Mammary epithelial cell (primary cell): ENCODE measurements at regions of chr6 and their contacts with region 1.

Region 1: GRCh38 chr6:27237089-27237803 is 10.3 kb upstream of the PRSS16 start:
- DNase-seq: peak; percentile 71
- H3K4me3 ChIP-seq: peak overlapping the region in 2 of 3 experiments; percentile 28 to 29
- H3K27ac ChIP-seq: no peak overlapping the region
- H3K4me1 ChIP-seq: peaks cover 18% of the 10 kb centered on the region
- H3K27me3 ChIP-seq: no peaks in the 10 kb centered on the region
- CTCF ChIP-seq: no peak

Region 2: GRCh38 chr6:27213544-27214125 is 23.6 kb before region 1 on chr6:
- CTCF ChIA-PET with region 1: no interaction called
- dilution Hi-C with region 1: no loop called
- in situ Hi-C with region 1: no loop called
- intact Hi-C with region 1: loop called (anchors 2 kb)
- DNase-seq: peak; percentile 40
- H3K4me3 ChIP-seq: peak overlapping the region in 1 of 3 experiments; percentile 58
- H3K27ac ChIP-seq: no peak overlapping the region
- H3K4me1 ChIP-seq: no peaks in the 10 kb centered on the region
- H3K27me3 ChIP-seq: no peaks in the 10 kb centered on the region
- CTCF ChIP-seq: no peak

Region 3: DNA sequence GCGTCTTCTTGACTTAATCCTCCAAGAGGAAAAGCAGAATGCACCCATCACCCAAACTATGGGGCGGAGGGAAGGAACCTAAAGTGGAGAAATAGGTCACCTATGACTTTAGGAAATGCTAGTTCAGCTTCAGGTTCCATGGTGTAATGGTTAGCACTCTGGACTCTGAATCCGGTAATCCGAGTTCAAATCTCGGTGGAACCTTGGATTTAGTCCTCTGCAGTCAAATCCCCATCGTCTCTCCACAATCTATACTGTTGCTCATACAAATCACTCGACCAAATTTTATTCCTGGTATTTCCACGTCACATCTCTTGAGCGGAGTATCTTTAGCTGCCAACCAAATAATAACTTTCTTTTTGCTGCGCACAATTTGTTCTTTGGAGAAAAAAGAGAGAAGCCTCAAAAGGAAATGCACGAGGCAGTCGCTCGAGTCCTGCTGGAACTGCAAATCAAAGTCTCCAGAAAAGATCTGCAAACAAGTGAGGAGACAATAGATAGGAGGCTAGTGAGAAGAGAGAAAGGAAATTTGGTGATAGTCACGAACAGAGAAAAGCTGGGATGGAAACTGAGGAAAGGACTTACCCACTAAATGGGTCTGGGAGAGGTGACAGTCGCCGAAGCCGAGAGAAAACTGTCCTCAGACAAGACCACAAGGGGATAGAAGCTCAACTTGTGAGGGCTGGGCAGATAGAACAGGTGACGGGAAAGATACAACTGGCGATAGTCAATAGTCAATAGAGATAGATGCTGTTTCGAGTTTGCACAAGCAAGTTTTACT is 58.2 kb after region 1 on chr6:
- CTCF ChIA-PET with region 1: no interaction called
- dilution Hi-C with region 1: no loop called
- in situ Hi-C with region 1: no loop called
- intact Hi-C with region 1: loop called (anchors 2 kb)
- DNase-seq: peak; percentile 82
- H3K4me3 ChIP-seq: peak overlapping the region; percentile 54 to 77 (median 63)
- H3K27ac ChIP-seq: no peak overlapping the region
- H3K4me1 ChIP-seq: peaks cover 4% of the 10 kb centered on the region
- H3K27me3 ChIP-seq: no peaks in the 10 kb centered on the region
- CTCF ChIP-seq: no peak

Region 4: DNA sequence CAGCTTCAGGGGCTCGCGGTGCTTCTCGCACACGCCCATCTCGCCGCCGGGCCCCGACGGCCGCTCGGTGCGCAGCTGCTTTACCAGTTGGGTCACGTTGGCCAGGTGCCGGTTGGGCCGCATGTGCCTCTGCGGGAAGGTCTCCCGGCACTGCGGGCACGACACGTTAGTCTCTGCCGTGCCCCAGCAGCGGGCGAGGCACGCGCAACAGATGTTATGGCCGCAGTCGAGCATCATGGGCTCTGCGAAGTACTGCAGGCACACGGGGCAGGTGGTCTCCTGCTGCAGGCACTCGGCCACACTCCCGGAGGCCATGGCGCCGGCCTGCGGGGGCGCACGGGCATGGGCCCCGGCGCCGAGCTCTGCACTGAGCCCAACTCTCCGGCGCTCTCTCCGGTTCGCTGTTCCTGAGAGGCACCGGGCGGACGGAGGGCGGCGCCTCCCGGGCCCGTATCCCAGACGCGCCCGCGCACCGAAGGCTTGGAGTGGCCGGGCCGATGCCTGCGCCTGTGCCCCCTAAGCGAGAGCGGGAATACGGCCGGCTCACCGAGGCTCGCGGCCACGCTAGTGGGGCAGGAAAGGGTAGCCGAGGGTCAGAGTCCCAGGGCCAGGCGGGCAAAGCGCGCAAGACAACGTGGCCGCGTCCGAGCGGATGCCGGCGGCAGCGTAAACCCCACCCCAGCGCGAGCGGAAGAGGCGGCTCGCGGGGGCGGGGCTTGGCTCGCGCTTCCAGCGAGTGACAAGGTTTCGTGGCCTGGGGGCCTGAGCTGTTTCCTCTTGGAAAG is 1686.3 kb after region 1 on chr6 and contains the start of gene TRIM27:
- CTCF ChIA-PET with region 1: no interaction called
- dilution Hi-C with region 1: no loop called
- in situ Hi-C with region 1: no loop called
- intact Hi-C with region 1: no loop called
- DNase-seq: peak; percentile 81
- H3K4me3 ChIP-seq: peak within 1 kb of the TSS; percentile 67 to 88 (median 73)
- H3K27ac ChIP-seq: peak within 1 kb of the TSS; percentile 82
- H3K4me1 ChIP-seq: peaks cover 19% of the 10 kb centered on the region
- H3K27me3 ChIP-seq: no peaks in the 10 kb centered on the region
- CTCF ChIP-seq: peak in 1 of 2 donors; percentile 2
- total RNA-seq, gene TRIM27: 45.3 to 49.2 TPM